Activated T-helper 1 cell treated with anti-CD3 and anti-CD28 coated beads, Interleukin-12 subunit alpha, Interleukin-12 subunit beta, Interleukin-2, Interleukin-4 antibody, amounts not matched to agents 30 ng/mL and 10 ng/mL and 1 ng/mL, durations not matched to agents 14 hours and 24 hours and 36 hours (primary cell): ENCODE measurements at regions of chr16 and their contacts with region 1.

Region 1: GRCh38 chr16:11757671-11758545 is 15.3 kb upstream of the TXNDC11 start:
- DNase-seq: no peak
- H3K4me3 Mint-ChIP-seq: no peak overlapping the region
- H3K27ac Mint-ChIP-seq: peak overlapping the region; percentile 18
- H3K4me1 Mint-ChIP-seq: no peaks in the 10 kb centered on the region
- H3K27me3 Mint-ChIP-seq: no peaks in the 10 kb centered on the region

Region 2: DNA sequence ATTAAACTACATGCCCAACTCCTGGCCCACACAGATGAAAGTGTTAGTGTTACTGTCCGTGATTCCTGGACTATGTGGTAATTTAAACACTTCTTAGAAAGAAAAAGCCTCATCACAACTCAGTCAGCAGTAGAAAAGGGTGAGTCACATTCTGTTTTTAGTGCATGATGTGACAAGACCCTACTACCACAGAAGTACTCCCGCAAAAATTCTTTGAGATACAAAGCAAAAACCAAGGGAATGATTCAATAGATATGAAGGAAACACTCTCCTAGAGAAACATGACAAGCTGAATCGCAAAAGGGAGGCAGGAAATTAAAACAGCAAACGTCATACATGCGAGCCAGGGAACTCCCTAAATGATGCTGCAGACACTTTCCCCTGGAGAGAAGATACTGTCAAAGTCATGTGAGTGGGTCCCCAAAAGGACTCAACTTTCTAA is 75.2 kb before region 1 on chr16:
- intact Hi-C with region 1: no loop called
- DNase-seq: no peak
- H3K4me3 Mint-ChIP-seq: no peak overlapping the region
- H3K27ac Mint-ChIP-seq: peak overlapping the region; percentile 61
- H3K4me1 Mint-ChIP-seq: peaks cover 45% of the 10 kb centered on the region
- H3K27me3 Mint-ChIP-seq: no peaks in the 10 kb centered on the region

Region 3: GRCh38 chr16:11715246-11715947 is 42.5 kb before region 1 on chr16:
- intact Hi-C with region 1: no loop called
- DNase-seq: no peak
- H3K4me3 Mint-ChIP-seq: no peak overlapping the region
- H3K27ac Mint-ChIP-seq: peak overlapping the region; percentile 13
- H3K4me1 Mint-ChIP-seq: peaks cover 16% of the 10 kb centered on the region
- H3K27me3 Mint-ChIP-seq: no peaks in the 10 kb centered on the region

Region 4: DNA sequence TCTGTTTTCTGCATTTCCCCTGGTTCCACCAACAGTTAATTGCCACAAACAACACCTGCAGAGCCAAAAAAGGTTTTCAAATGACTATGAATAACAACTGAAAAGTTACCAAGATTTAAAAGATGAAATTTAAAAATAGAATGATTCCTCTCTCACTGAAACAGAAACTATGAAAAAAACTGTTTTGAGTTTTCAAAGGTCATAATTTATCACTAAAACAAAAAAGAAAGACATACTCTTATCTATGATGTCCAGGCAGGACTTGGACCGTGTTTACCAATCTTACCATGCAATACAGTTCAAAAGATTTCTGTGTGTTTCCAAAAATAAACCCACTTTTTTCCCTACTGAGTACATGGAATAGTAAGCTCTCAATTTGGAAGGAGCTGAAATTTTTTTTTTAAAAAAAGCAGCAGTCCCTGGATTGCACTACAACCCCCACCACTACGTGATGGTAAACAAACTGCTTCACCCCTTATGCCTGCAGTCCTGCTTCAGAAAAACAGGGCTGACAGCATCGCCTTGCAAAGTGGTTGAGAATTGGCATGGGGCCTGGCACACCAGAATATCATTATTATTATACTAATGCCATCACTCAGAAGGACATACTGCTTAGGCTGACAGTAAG is 23.8 kb before region 1 on chr16:
- intact Hi-C with region 1: loop called (anchors 2 kb)
- DNase-seq: no peak
- H3K4me3 Mint-ChIP-seq: peak overlapping the region; percentile 13
- H3K27ac Mint-ChIP-seq: peak overlapping the region; percentile 72
- H3K4me1 Mint-ChIP-seq: peaks cover 89% of the 10 kb centered on the region
- H3K27me3 Mint-ChIP-seq: no peaks in the 10 kb centered on the region